Calu3 (cell line): ENCODE measurements at regions of chr18 and their contacts with region 1.

Region 1: GRCh38 chr18:7272311-7273049 is 41.6 kb downstream of the LRRC30 start:
- DNase-seq: peak; percentile 68
- H3K4me3 Mint-ChIP-seq: peak overlapping the region; percentile 55
- H3K27ac Mint-ChIP-seq: no peak overlapping the region
- H3K4me1 Mint-ChIP-seq: peaks cover 17% of the 10 kb centered on the region
- H3K27me3 Mint-ChIP-seq: no peaks in the 10 kb centered on the region
- CTCF ChIP-seq: peak; percentile 66

Region 2: GRCh38 chr18:7452331-7452730 is 179.9 kb after region 1 on chr18:
- CTCF ChIA-PET with region 1: interaction called, 8 read pairs
- intact Hi-C with region 1: loop called (anchors 10 kb)
- DNase-seq: peak; percentile 62
- H3K4me3 Mint-ChIP-seq: no peak overlapping the region
- H3K27ac Mint-ChIP-seq: no peak overlapping the region
- H3K4me1 Mint-ChIP-seq: no peaks in the 10 kb centered on the region
- H3K27me3 Mint-ChIP-seq: peaks cover 71% of the 10 kb centered on the region
- CTCF ChIP-seq: peak; percentile 79

Region 3: DNA sequence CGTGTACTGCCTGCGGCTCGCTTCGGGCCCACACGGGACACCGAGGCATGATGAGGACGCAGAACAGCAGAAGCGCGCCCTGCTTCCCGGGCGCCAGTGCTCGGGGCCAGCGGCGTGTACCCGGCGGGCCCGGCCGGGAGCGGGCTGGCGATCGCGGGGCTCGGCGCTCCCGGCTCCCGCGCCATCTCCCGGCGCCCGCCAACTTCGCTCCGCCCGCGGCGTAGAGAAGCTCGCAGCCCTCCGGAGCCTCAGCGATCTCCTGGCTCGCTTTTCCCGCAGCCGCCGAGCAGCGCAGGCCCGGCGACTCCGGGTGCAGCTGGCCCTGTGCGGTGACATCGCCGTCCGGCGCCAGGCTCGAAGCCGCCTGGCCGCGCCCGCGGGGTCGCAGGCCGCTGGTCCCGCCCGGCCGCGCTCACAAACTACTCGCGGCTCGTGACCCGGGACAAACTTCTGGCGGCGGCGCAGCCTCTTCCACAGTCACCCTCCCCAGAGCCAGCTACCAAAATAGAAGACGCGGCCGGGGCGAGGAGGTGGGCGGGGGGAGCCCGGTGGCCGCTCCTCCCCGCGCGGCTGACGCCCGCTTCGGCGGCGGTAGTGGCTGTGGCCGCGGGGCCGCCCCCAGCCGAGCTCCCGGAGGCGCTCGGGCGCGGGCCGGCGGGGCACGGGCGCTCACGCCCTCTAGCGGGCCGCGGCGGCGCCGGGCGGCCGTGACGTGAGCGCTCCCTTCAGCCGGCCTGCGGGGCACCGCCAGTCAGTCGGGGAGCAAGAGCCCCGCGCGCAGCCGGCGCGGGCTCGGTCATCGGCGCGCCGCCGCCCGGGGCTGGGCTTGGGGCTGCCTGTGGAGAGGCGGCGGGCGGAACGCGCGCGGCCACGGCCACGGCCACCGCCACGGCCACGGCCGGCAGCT is 294.3 kb after region 1 on chr18 and contains the start of gene PTPRM:
- CTCF ChIA-PET with region 1: interaction called, 30 read pairs
- intact Hi-C with region 1: loop called (anchors 2 kb)
- DNase-seq: peak; percentile 86
- H3K4me3 Mint-ChIP-seq: peak within 1 kb of the TSS; percentile 78
- H3K27ac Mint-ChIP-seq: no peak within 1 kb of the TSS
- H3K4me1 Mint-ChIP-seq: peaks cover 36% of the 10 kb centered on the region
- H3K27me3 Mint-ChIP-seq: no peaks in the 10 kb centered on the region
- CTCF ChIP-seq: no peak
- total RNA-seq, gene PTPRM: 42.3 and 48.5 TPM in 2 replicates

Region 4: GRCh38 chr18:7755753-7756475 is 483.4 kb after region 1 on chr18:
- CTCF ChIA-PET with region 1: interaction called, 3 read pairs
- intact Hi-C with region 1: loop called (anchors 10 kb)
- DNase-seq: no peak
- H3K4me3 Mint-ChIP-seq: no peak overlapping the region
- H3K27ac Mint-ChIP-seq: no peak overlapping the region
- H3K4me1 Mint-ChIP-seq: peaks cover 31% of the 10 kb centered on the region
- H3K27me3 Mint-ChIP-seq: no peaks in the 10 kb centered on the region
- CTCF ChIP-seq: no peak

Region 5: DNA sequence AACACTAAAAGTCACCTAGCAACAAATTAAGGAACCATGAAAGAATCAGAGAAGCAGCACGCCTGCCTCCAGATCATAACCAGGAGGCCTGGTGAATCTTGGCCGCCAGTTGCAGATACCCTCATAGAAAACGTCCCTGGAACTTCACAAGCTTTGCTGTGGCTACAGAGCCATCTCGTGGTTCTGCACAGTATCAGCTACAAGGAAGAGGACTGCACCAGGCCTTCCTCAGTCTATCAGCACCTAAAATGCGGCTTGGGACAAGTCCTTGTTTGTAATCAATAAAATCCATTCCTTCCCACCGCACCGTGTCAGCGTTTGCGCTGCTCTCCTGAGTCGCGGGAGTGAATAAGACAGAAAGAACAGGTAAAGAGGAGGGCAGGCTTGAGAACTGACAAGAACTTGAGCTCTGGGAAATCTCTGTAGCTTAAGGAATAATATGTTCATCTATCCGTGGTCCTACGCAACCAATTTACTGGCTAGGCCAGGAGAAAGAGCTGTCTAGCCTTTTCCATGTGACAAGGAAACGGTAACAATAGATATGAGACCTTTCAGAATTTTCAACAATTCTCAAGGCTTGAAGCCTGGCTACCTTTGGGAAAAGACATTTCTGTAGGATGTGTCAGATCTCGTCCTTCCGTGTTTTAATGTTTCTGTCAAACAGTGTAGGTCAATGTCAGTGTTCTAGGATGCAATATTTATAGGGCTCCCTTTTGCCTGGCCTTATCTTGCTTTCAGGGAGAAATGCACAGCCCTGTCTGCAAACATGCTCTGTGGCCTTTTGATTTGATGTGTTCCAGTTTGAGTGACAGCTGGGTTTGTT is 1208.2 kb after region 1 on chr18:
- CTCF ChIA-PET with region 1: interaction called, 18 read pairs
- intact Hi-C with region 1: no loop called
- DNase-seq: peak; percentile 50
- H3K4me3 Mint-ChIP-seq: no peak overlapping the region
- H3K27ac Mint-ChIP-seq: no peak overlapping the region
- H3K4me1 Mint-ChIP-seq: no peaks in the 10 kb centered on the region
- H3K27me3 Mint-ChIP-seq: peaks cover 87% of the 10 kb centered on the region
- CTCF ChIP-seq: peak; percentile 32